ENCODE measurements at regions of chr4 and their contacts with region 1.

Region 1: GRCh38 chr4:9704551-9705332 is 76.7 kb upstream of the DRD5 start:
- DNase-seq: no peak
- H3K4me3 Mint-ChIP-seq: no peak overlapping the region
- H3K27ac Mint-ChIP-seq: no peak overlapping the region
- H3K4me1 Mint-ChIP-seq: peaks cover 23% of the 10 kb centered on the region
- H3K27me3 Mint-ChIP-seq: no peaks in the 10 kb centered on the region

Region 2: DNA sequence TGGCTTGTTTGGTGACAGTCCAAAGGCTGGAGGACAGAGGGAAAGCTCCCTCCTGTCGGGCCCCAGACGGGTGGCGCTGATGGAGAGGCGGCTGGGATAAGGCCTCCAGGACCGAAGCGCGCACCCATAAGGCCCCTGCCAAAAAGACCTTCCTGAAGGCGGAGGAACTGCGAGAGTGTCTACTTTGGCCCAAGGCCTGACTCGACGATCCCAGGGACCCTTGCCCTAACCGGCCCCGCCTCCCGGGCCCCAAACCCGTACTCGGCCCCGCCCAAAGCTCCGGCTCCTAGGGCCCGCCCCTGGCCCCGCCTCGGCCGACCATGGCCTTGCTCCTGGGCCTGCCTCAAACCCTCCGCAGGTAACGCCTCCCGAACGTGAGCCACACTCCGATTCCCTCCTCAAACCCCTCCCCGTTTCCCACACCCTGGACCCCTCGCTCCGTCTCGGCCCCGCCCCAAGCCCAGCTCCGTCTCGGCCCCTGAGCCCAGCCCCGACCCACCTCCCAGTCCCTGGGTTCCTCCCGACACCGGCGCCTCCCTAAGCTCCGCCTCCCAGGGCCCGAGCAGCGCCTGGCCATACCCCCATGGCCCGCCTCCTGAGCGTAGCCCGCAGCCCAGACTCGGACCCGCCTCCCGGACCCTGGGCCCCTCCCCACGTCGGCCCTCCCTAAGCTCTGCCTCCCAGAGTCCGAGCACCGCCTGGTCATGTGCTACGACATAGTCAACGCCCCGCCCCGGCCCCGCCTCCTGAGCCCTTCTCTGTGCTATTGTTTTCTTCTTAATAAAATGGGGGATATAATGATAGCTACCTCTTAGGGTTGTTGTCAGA is 13.3 kb before region 1 on chr4:
- CTCF ChIA-PET with region 1: interaction called, 48 read pairs
- POLR2A ChIA-PET with region 1: interaction called, 3 read pairs
- DNase-seq: peak; percentile 92
- H3K4me3 Mint-ChIP-seq: peak overlapping the region; percentile 75
- H3K27ac Mint-ChIP-seq: peak overlapping the region; percentile 67
- H3K4me1 Mint-ChIP-seq: peaks cover 17% of the 10 kb centered on the region
- H3K27me3 Mint-ChIP-seq: peaks cover 7% of the 10 kb centered on the region

Region 3: DNA sequence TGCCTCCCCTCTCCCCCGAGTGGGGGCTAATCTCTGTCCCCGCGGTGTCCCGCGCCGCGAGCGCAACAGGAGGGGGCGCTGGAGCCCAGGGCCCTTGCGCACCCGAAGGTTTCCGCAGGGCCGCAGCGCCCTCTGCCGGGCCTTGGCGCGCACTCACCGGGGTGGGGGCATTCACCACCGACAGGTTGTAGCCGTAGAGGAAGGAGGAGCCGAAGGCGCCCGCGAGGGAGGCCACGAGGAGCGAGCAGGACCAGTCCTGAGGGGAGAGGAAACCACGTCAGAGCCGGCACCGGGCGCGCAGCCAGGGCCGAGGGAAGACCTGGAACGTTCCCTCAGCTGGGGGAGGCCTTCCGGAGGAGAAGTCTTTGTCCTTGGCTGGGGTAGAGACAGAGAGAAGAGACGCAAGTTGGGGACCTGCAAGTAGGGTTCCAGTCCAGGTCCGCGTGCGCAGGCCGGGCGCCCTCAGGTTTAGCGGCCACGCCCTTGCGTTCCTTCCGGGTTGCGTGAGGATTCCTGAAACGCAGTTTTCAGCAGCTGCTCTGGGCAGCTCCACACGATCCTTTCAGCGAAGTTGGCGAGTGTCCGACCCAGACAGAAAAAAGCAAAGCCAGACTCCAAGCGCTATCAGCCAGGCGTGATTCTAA is 314.2 kb after region 1 on chr4:
- CTCF ChIA-PET with region 1: interaction called, 91 read pairs
- POLR2A ChIA-PET with region 1: interaction called, 6 read pairs
- DNase-seq: peak; percentile 96
- H3K4me3 Mint-ChIP-seq: peak overlapping the region; percentile 79
- H3K27ac Mint-ChIP-seq: peak overlapping the region; percentile 87
- H3K4me1 Mint-ChIP-seq: peaks cover 21% of the 10 kb centered on the region
- H3K27me3 Mint-ChIP-seq: peaks cover under 1% of the 10 kb centered on the region

Region 4: GRCh38 chr4:10045481-10045880 is 340.7 kb after region 1 on chr4:
- CTCF ChIA-PET with region 1: no interaction called
- POLR2A ChIA-PET with region 1: no interaction called
- DNase-seq: no peak
- H3K4me3 Mint-ChIP-seq: no peak overlapping the region
- H3K27ac Mint-ChIP-seq: no peak overlapping the region
- H3K4me1 Mint-ChIP-seq: peaks cover 19% of the 10 kb centered on the region
- H3K27me3 Mint-ChIP-seq: peaks cover 1% of the 10 kb centered on the region

Measured in activated CD4-positive, alpha-beta memory T cell treated with anti-CD3 and anti-CD28 coated beads, Interleukin-2, amount 10 ng/mL, durations not matched to agents 7 days and 5 days (primary cell).